B cell (primary cell): ENCODE measurements at regions of chr17 and their contacts with region 1.

Region 1: GRCh38 chr17:79393358-79394202 is 217.3 kb downstream of the RBFOX3 start:
- DNase-seq: peak; percentile 83
- ATAC-seq: peak; percentile 83
- H3K4me3 ChIP-seq: no peak overlapping the region
- H3K4me3 Mint-ChIP-seq: no peak overlapping the region
- H3K27ac ChIP-seq: no peak overlapping the region
- H3K27ac Mint-ChIP-seq: peak overlapping the region; percentile 17
- H3K4me1 ChIP-seq: peaks cover 0 to under 1% of the 10 kb centered on the region in 2 donors
- H3K4me1 Mint-ChIP-seq: peaks cover 3% of the 10 kb centered on the region
- H3K27me3 ChIP-seq: peaks cover 0 to 53% (median 10%) of the 10 kb centered on the region in 4 experiments
- H3K27me3 Mint-ChIP-seq: peaks cover 57% of the 10 kb centered on the region
- CTCF ChIP-seq: peak; percentile 96

Region 2: GRCh38 chr17:79074650-79075445 is 318.7 kb before region 1 on chr17 and contains the start of gene ENGASE:
- CTCF ChIA-PET with region 1: interaction called, 21 read pairs
- POLR2A ChIA-PET with region 1: no interaction called
- intact Hi-C with region 1: no loop called
- DNase-seq: peak; percentile 92
- ATAC-seq: peak; percentile 97
- H3K4me3 ChIP-seq: peak within 1 kb of the TSS; percentile 7 to 73 (median 66)
- H3K4me3 Mint-ChIP-seq: peak within 1 kb of the TSS; percentile 88
- H3K27ac ChIP-seq: peak within 1 kb of the TSS; percentile 49 to 70
- H3K27ac Mint-ChIP-seq: peak within 1 kb of the TSS; percentile 68
- H3K4me1 ChIP-seq: peaks cover 11 to 18% of the 10 kb centered on the region in 2 donors
- H3K4me1 Mint-ChIP-seq: peaks cover 10% of the 10 kb centered on the region
- H3K27me3 ChIP-seq: no peaks in the 10 kb centered on the region
- H3K27me3 Mint-ChIP-seq: peaks cover 3% of the 10 kb centered on the region
- CTCF ChIP-seq: no peak
- total RNA-seq, gene ENGASE: 115 and 122 TPM in 2 replicates

Region 3: DNA sequence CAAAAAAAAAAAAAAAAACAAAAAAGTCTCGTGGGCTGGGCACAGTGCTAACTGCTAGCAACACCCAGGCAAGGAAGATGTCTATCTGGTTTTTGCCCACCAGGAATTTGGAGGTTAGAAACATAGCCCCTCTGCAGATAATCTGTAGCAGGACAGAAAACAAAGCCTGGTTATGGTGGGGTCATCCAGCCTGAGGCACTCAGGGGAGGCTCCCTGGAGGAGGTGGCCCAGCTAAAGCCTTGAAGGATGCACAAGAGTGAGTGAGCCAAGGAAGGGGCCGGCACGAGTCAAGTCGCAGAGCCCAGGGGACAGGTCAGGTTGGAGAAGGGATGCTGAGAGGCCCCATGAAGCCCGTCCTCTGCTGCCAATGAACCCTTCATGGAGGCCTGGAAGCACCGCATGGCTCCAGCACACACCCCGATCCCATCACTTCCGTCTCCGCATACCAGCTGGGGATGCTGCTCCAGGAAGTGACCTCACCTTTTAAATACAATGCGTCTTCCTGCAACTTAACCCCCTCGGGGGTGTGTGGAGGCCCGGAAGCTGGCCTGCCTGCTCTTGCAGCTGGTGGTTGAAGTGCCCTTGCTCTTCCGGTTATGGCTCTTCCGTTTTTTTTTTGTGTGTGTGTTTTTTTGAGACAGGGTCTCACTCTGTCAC is 232.5 kb before region 1 on chr17:
- CTCF ChIA-PET with region 1: interaction called, 17 read pairs
- POLR2A ChIA-PET with region 1: no interaction called
- intact Hi-C with region 1: no loop called
- DNase-seq: no peak
- ATAC-seq: no peak
- H3K4me3 ChIP-seq: no peak overlapping the region
- H3K4me3 Mint-ChIP-seq: no peak overlapping the region
- H3K27ac ChIP-seq: no peak overlapping the region
- H3K27ac Mint-ChIP-seq: no peak overlapping the region
- H3K4me1 ChIP-seq: peaks cover 0 to 6% of the 10 kb centered on the region in 2 donors
- H3K4me1 Mint-ChIP-seq: peaks cover 4% of the 10 kb centered on the region
- H3K27me3 ChIP-seq: no peaks in the 10 kb centered on the region
- H3K27me3 Mint-ChIP-seq: peaks cover 4% of the 10 kb centered on the region
- CTCF ChIP-seq: no peak

Region 4: DNA sequence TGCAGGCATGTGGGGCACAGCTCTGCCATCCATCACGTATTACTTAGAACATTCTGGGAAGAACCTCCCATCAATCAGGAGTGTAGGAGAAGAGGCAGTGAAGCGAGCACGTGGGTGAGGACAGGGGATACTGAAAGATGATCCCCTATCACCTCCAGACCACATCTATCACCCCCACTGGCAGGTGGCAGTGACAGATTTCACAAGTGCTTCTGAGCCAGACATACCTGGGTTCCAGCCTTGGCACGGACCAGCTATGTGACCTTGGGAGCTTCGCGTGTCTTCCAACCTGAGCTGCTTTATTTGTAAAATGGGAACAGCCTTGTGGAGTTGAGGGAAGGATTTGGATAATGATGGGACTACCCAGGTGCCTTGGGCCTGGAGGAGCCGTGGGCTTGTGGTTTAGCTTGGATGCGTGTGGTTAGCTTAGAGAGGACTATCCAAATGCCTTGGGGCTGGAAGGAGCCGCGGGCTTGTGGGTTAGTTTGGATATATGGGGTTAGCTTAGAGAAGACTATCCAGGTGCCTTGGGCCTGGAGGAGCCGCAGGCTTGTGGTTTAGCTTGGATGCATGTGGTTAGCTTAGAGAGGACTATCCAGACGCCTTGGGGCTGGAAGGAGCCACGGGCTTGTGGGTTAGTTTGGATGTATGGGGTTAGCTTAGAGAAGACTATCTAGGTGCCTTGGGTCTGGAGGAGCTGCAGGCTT is 112.6 kb before region 1 on chr17:
- CTCF ChIA-PET with region 1: interaction called, 10 read pairs
- POLR2A ChIA-PET with region 1: no interaction called
- intact Hi-C with region 1: no loop called
- DNase-seq: no peak
- ATAC-seq: no peak
- H3K4me3 ChIP-seq: no peak overlapping the region
- H3K4me3 Mint-ChIP-seq: no peak overlapping the region
- H3K27ac ChIP-seq: no peak overlapping the region
- H3K27ac Mint-ChIP-seq: no peak overlapping the region
- H3K4me1 ChIP-seq: no peaks in the 10 kb centered on the region
- H3K4me1 Mint-ChIP-seq: no peaks in the 10 kb centered on the region
- H3K27me3 ChIP-seq: no peaks in the 10 kb centered on the region
- H3K27me3 Mint-ChIP-seq: peaks cover 25% of the 10 kb centered on the region
- CTCF ChIP-seq: no peak

Region 5: GRCh38 chr17:79340333-79341221 is 53.0 kb before region 1 on chr17:
- CTCF ChIA-PET with region 1: interaction called, 39 read pairs
- POLR2A ChIA-PET with region 1: no interaction called
- intact Hi-C with region 1: no loop called
- DNase-seq: peak; percentile 89
- ATAC-seq: peak; percentile 81
- H3K4me3 ChIP-seq: peak overlapping the region; percentile 8 to 57 (median 47)
- H3K4me3 Mint-ChIP-seq: peak overlapping the region; percentile 94
- H3K27ac ChIP-seq: peak overlapping the region; percentile 75 to 88
- H3K27ac Mint-ChIP-seq: peak overlapping the region; percentile 93
- H3K4me1 ChIP-seq: peaks cover 38 to 49% of the 10 kb centered on the region in 2 donors
- H3K4me1 Mint-ChIP-seq: peaks cover 50% of the 10 kb centered on the region
- H3K27me3 ChIP-seq: no peaks in the 10 kb centered on the region
- H3K27me3 Mint-ChIP-seq: peaks cover 3% of the 10 kb centered on the region
- CTCF ChIP-seq: no peak